ENCODE measurements at regions of chr5 and their contacts with region 1.

Region 1: GRCh38 chr5:116947691-116948528 is 373.3 kb upstream of the SEMA6A start:
- DNase-seq: peak; percentile 35
- ATAC-seq: peak; percentile 33 to 61

Region 2: DNA sequence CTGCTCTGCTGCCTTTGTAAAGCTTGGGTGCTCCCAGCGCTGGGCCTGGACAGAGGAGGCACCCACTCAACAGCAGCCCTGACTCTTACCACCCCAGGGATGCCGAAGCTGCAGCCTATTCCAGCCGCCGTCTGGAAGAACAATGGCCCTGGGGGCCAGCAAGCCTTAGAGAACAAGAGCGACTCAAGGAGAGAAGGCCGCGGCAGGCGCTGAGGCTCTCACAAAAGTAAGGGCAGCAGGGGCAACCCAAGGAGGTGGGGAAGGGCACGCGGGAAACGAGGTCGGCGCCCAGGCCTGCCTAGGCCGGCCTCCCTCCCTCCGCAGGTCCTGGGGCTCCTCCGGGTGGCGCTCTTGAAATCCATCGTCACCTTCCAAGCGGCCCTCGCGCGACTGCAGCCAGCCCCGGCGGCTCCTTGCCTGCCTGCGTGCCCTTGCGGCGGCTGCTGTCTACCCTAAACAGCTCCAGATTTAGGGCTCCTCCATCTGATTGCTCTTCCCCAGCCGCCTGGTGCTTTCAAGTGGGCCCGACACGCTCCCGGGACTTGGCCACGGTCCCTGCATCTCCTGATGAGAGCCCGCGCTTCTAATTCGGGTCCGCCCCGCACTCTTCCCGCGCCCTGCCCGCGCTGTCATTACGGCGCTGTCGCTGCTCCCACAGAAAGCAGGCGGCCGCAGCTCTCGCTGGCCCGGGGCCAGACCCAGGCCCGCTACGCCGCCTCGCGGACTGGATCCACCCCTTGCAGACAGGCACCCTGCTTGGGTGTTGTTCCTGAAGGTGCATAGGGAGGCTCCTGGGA is 586.5 kb before region 1 on chr5:
- intact Hi-C with region 1: no loop called
- DNase-seq: peak; percentile 65
- ATAC-seq: peak; percentile 66 to 77

Region 3: GRCh38 chr5:116574367-116575325 is 373.3 kb before region 1 on chr5 and contains the start of gene SEMA6A:
- intact Hi-C with region 1: loop called (anchors 5 to 10 kb)
- DNase-seq: peak; percentile 92
- ATAC-seq: peak; percentile 91 to 92
- total RNA-seq, gene SEMA6A: 3.8 to 5.7 TPM

Region 4: DNA sequence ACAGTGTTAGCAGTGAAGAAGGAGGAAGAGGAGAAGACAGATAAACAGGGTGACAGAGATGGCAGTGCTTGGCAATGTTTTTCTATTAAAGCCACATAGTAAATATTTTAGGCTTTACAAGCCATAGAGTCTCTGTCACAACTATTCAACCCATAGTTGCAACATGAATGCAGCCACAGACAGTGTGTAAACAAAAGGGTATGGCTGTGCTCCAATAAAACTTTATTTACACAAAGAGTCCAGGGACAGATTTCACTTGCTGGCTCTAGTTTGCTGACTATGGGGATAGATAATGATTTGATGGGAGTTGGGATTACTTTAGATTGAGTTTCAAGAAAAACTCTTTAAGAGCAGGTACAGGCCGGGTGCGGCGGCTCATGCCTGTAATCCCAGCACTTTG is 148.5 kb before region 1 on chr5:
- intact Hi-C with region 1: no loop called
- DNase-seq: no peak
- ATAC-seq: no peak

Measured in left cardiac atrium (tissue), 4 donors.